Left lung (tissue), 14 donors: ENCODE measurements at regions of chr2 and their contacts with region 1.

Region 1: GRCh38 chr2:238263204-238264071 is 23.6 kb upstream of the HES6 start:
- DNase-seq: peak; percentile 81 to 93 (median 91)
- ATAC-seq: peak; percentile 93
- H3K4me3 ChIP-seq: no peak overlapping the region
- H3K27ac ChIP-seq: peak overlapping the region; percentile 48 to 67
- H3K4me1 ChIP-seq: peaks cover 14 to 29% of the 10 kb centered on the region in 2 donors
- H3K27me3 ChIP-seq: no peaks in the 10 kb centered on the region
- CTCF ChIP-seq: peak; percentile 75 to 77

Region 2: GRCh38 chr2:237858294-237859081 is 404.9 kb before region 1 on chr2:
- intact Hi-C with region 1: loop called in 1 of 2 experiments (anchors 10 kb)
- DNase-seq: peak; percentile 47 to 77 (median 60)
- ATAC-seq: peak; percentile 91
- H3K4me3 ChIP-seq: no peak overlapping the region
- H3K27ac ChIP-seq: no peak overlapping the region
- H3K4me1 ChIP-seq: peaks cover 4 to 22% of the 10 kb centered on the region in 2 donors
- H3K27me3 ChIP-seq: peaks cover 4 to 50% of the 10 kb centered on the region in 2 donors
- CTCF ChIP-seq: peak; percentile 61 to 62

Region 3: DNA sequence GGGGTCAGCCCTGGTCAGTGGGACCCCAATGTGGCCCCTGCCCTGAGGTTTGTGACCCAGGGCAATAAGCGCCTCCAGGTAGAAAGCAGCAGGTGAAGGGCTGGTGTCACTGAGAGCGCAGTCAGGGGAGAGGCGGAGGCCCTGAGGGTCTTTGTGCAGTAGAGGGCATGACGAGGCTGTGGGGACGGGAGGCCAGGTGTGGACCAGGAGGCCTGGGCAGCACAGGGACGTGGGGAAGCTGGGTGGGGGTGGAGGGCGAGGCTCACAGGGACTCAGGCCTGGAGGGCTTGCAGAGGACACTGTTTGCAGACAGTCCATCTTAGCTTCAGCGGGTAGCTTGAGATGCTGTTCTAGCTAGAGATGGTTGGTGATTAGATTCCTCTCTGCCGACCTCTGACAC is 88.9 kb after region 1 on chr2:
- intact Hi-C with region 1: no loop called
- DNase-seq: peak in 1 of 4 donors; percentile 59
- ATAC-seq: no peak
- H3K4me3 ChIP-seq: no peak overlapping the region
- H3K27ac ChIP-seq: no peak overlapping the region
- H3K4me1 ChIP-seq: no peaks in the 10 kb centered on the region
- H3K27me3 ChIP-seq: no peaks in the 10 kb centered on the region
- CTCF ChIP-seq: no peak

Region 4: DNA sequence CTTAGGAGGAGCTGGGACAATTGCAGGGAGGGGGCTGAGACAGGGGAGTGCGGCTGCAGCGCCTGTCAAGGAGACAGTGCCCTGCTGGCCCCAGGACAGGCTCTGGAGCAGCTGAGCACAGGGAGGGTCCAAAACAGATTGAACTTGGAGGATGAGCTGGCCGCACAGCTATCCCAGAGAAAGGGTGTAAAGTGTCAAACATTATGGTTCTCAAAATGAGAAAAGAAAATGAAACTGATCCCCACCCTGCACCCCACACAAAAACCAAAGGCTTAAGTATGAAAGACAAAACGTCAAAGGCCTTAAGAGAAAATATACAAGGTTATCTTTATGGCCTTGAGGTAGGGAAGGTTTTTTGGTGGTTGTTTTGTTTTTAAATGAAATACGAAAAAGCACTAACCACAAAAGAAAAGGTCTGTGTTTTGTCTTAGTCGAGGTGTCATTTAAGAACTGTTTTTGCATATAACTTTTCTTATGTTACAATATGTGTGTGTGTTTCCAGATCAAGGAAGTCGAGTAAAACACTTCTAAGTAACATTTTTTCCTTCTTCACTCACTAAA is 1025.6 kb after region 1 on chr2:
- intact Hi-C with region 1: no loop called
- DNase-seq: peak in 1 of 4 donors; percentile 26
- ATAC-seq: no peak
- H3K4me3 ChIP-seq: no peak overlapping the region
- H3K27ac ChIP-seq: peak overlapping the region in 1 of 2 donors; percentile 57
- H3K4me1 ChIP-seq: peaks cover 20 to 49% of the 10 kb centered on the region in 2 donors
- H3K27me3 ChIP-seq: no peaks in the 10 kb centered on the region
- CTCF ChIP-seq: no peak